Testis (tissue), 5 donors: ENCODE measurements at regions of chr3 and their contacts with region 1.

Region 1: DNA sequence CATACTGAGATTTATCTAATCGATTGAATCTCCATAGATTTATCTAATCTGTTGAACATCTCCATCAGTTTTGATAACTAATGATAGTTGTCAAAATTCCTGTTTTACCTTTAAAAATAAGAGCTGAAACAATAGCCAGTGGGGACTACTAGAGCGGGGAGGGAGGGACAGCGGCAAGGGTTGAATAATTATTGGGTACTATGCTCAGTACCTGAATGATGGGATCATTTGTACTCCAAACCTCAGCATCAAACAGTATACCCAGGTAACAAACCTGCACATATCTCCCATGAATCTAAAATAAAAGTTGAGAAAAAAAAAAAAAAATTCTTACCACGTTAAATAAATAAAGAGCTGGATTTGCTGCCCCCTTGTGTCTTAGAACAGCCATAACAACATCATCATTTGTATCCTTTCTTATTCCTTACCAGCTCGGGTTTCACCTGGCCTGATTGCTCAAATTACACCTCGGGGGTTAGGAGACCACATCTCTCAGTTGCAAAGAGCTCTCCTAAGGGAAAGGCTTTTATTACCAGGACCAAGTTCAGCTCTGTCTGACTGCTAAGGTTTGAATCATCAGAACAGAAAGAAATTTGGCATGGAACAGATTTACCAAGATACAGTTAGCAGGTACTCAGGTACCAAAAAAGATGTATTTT is 25.7 kb upstream of the RPL39L start:
- DNase-seq: peak; percentile 50
- H3K4me3 ChIP-seq: no peak overlapping the region
- H3K27ac ChIP-seq: no peak overlapping the region
- H3K4me1 ChIP-seq: no peaks in the 10 kb centered on the region
- H3K27me3 ChIP-seq: no peaks in the 10 kb centered on the region
- CTCF ChIP-seq: peak; percentile 43 to 84 (median 55)
- POLR2A ChIP-seq: no peak

Region 2: GRCh38 chr3:186852994-186853393 is 312.0 kb before region 1 on chr3:
- intact Hi-C with region 1: loop called (anchors 10 kb)
- DNase-seq: no peak
- H3K4me3 ChIP-seq: no peak overlapping the region
- H3K27ac ChIP-seq: no peak overlapping the region
- H3K4me1 ChIP-seq: no peaks in the 10 kb centered on the region
- H3K27me3 ChIP-seq: no peaks in the 10 kb centered on the region
- CTCF ChIP-seq: no peak
- POLR2A ChIP-seq: no peak